ENCODE measurements at regions of chr22 and their contacts with region 1.

Region 1: DNA sequence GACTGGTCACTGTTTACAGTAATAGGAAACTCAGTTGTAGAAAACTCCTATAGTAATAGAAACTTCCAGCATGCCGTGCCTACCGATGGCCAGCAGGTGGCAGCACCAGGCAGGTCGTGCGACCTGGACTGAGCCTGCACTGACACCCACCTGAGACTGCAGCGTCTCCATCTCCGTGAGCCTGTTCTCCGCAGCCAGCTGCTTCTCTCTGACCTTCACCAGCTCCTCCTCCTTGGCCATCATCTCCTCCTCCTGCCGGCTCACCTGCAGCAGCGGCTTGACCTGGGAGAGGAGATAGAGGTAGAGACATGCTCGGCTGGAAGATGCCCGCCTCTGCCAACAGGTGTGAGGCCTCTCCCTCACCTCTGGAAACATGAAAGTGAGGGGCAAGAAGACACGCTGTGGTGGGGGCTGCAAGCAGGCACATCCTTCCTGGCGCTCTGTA is 48.5 kb downstream of the APOL1 start:
- DNase-seq: peak; percentile 61

Region 2: DNA sequence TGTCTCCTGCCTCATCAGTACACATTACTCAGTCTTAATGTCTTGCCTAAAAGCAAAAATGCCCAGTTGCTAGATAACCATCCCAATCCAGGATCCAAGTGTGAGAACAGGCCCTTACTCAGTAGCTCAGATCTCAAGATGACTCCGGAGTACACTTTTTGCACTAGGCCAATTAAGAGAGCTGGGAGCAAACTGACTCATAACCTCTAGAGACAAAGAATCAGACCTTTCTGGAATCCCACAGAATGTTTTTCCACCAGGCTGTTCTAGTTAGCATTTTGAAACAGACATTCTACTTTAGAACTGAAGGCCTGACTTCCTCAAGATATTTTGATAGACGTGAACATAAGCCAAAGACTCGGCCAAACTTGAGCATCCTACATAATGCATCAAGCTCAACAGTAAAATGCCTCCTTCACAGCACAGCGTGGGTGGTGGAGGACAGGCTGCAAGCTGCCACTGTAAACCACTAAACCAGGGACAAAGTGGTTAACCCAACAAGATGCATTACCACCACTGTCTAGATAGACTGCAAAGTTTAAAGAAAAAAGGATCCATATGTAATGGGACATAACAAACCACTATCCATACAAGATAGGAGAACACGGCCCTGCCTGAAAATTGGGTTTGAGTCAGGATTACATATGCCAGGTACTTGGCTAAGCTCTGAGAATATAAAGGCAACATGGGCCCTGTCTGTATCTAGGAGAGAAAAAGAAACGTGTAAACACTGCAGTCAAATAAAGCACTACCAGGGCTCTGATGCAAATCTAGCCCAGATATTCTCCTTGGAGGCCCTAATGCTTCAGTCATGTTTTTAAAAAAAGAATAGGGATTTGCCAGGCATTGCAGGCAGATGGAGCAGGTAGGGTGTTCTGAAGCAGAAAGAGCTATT is 38.0 kb after region 1 on chr22:
- in situ Hi-C with region 1: loop called (anchors 5 kb)
- DNase-seq: no peak

Region 3: GRCh38 chr22:36365020-36365411 is 63.6 kb after region 1 on chr22:
- in situ Hi-C with region 1: no loop called
- DNase-seq: peak; percentile 79

Measured in Caki2 (cell line).